ENCODE measurements at regions of chr14 and their contacts with region 1.

Region 1: DNA sequence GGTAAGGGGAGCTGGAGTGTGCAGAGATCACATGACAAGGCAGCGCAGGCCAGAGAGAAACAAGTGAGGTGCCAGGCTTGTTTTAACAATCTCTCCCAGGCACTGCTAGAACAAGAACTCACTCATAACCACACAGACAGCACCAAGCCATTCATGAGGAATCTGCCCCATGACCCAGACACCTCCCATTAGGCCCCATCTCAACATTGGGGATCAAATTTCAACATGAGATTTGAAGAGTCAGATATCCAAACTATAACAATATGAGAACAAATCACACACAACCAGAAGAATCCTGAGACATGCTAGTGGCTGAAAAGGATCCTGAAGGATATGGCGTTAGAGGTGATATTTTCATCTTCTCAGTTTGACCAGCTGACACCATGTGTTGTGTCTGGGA is 21.9 kb downstream of the OR6J1 start:
- DNase-seq: no peak
- ATAC-seq: no peak
- H3K4me3 ChIP-seq: no peak overlapping the region
- H3K4me3 Mint-ChIP-seq: no peak overlapping the region
- H3K27ac ChIP-seq: no peak overlapping the region
- H3K27ac Mint-ChIP-seq: no peak overlapping the region
- H3K4me1 ChIP-seq: no peaks in the 10 kb centered on the region
- H3K4me1 Mint-ChIP-seq: no peaks in the 10 kb centered on the region
- H3K27me3 ChIP-seq: no peaks in the 10 kb centered on the region
- H3K27me3 Mint-ChIP-seq: no peaks in the 10 kb centered on the region
- CTCF ChIP-seq: no peak

Region 2: GRCh38 chr14:22737052-22737451 is 114.8 kb after region 1 on chr14:
- CTCF ChIA-PET with region 1: no interaction called
- POLR2A ChIA-PET with region 1: no interaction called
- intact Hi-C with region 1: no loop called
- DNase-seq: no peak
- ATAC-seq: no peak
- H3K4me3 ChIP-seq: no peak overlapping the region
- H3K4me3 Mint-ChIP-seq: no peak overlapping the region
- H3K27ac ChIP-seq: no peak overlapping the region
- H3K27ac Mint-ChIP-seq: no peak overlapping the region
- H3K4me1 ChIP-seq: no peaks in the 10 kb centered on the region
- H3K4me1 Mint-ChIP-seq: peaks cover 2% of the 10 kb centered on the region
- H3K27me3 ChIP-seq: no peaks in the 10 kb centered on the region
- H3K27me3 Mint-ChIP-seq: peaks cover 5% of the 10 kb centered on the region
- CTCF ChIP-seq: no peak

Region 3: GRCh38 chr14:22796087-22796707 is 173.9 kb after region 1 on chr14:
- CTCF ChIA-PET with region 1: no interaction called
- POLR2A ChIA-PET with region 1: interaction called, 4 read pairs
- intact Hi-C with region 1: loop called in 1 of 2 experiments (anchors 5 kb)
- DNase-seq: no peak
- ATAC-seq: no peak
- H3K4me3 ChIP-seq: no peak overlapping the region
- H3K4me3 Mint-ChIP-seq: no peak overlapping the region
- H3K27ac ChIP-seq: no peak overlapping the region
- H3K27ac Mint-ChIP-seq: no peak overlapping the region
- H3K4me1 ChIP-seq: no peaks in the 10 kb centered on the region
- H3K4me1 Mint-ChIP-seq: no peaks in the 10 kb centered on the region
- H3K27me3 ChIP-seq: no peaks in the 10 kb centered on the region
- H3K27me3 Mint-ChIP-seq: peaks cover 32% of the 10 kb centered on the region
- CTCF ChIP-seq: no peak